Activated B cell treated with CpG ODN at 0.5 μM for 24 hours (primary cell): ENCODE measurements at regions of chr7 and their contacts with region 1.

Region 1: DNA sequence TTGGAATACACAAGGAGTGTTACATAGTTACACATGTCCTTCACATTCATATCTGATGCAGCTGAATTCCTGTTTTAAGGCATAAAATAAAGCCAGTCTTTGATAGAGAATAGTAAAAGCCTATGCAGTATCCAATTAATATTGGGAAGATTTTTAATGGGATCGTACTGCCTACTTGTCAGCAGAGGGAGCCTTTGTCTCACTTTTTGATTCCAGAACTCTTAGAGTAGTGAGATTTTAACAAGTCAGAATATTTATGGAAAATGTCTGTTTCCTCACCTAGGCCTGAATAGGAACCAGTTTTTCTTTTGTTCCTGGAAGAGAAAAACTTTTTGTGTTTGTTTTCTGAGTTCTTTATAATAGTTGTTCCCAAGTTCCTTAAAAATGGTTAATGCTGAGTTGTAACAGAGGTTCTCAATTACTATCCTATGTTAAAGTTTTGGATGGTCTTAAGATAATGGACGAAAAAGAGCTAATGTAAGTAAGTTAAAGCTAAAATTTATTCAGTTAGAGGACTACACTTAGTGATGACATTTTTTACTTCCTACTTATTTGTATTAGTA is 114.0 kb downstream of the BBS9 start:
- DNase-seq: no peak
- ATAC-seq: no peak
- H3K4me3 Mint-ChIP-seq: no peak overlapping the region
- H3K27ac Mint-ChIP-seq: no peak overlapping the region
- H3K4me1 Mint-ChIP-seq: no peaks in the 10 kb centered on the region
- H3K27me3 Mint-ChIP-seq: no peaks in the 10 kb centered on the region
- CTCF ChIP-seq: no peak

Region 2: DNA sequence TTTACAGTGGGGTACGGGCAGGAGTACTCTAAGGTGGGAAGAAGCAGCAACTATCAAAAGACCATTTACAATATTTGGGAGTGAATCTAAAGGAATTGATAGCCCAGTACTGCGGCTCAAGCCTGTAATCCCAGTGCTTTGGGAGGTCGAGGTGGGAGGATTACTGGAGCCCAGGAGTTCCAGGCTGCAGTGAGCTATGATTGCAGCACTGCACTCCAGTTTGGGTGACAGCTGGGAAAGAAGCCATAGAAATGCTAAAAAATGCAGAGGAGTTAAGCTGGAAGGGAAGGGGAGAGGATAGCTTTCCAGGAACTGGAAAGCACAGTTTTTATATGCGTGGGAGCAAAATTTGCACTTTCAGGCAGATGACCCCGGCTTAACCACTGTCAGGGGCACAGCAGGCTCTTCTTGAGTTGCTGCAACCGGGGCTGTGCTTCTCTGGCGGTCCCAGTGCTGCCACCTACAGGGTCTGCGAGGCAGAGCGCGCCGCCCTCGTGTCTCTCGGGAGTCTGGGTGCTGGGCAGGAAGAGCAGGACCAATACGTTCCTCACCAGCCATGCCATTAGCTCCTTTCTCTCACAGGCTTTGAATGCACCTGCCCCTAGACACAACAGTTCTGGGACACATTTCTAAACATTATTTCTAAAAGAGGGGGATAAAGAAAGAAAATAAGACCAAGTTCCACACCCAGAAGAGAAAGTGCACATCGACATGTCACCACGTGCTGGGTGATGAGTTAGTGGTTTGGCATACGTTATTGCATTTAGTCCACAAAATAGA is 651.8 kb after region 1 on chr7:
- CTCF ChIA-PET with region 1: no interaction called
- POLR2A ChIA-PET with region 1: no interaction called
- intact Hi-C with region 1: loop called (anchors 1 kb)
- DNase-seq: peak; percentile 51
- ATAC-seq: peak; percentile 82
- H3K4me3 Mint-ChIP-seq: no peak overlapping the region
- H3K27ac Mint-ChIP-seq: no peak overlapping the region
- H3K4me1 Mint-ChIP-seq: peaks cover 3% of the 10 kb centered on the region
- H3K27me3 Mint-ChIP-seq: peaks cover 45% of the 10 kb centered on the region
- CTCF ChIP-seq: no peak